Common myeloid progenitor, CD34-positive (primary cell): ENCODE measurements at regions of chr1 and their contacts with region 1.

Region 1: DNA sequence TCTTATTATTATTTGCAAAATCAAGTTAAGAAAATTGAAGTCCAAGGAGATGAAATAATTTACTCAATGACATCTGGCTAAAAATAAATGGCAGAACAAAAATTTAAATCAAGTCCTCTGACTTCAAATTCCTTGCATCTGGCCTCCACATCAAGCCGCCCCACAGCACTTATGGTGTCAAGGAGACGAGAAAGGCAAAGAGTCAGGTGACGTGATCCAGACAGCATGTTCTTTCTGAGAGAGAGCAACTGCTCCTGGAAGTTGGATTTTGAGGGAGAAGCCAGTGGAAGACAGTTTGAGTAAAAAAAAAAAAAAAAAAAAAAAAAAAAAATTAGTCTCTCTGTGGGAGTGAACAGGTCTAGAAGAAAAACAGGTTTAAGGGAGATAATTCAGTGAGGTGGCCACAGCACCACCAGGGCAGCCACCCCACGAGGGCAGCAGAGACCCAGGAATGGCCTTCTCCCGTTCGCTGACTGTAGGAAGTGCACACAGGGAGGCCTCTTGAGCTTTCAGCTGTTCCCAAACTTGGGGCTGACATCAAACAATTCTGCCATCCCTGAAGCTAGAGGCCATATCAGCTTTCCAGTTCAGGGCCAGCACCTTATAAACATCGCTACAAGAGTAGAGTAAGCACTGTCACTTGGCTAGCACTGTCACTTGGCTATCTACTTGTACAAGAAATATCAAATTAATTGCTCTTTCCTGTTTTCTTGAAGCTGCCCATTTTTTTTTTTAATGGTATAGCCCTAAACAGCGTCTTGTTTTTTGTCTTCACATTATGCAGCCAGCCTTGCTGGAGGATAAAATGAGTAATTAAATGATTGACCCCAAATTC is 7.8 kb downstream of the C1orf162 start:
- DNase-seq: peak; percentile 78 to 79 (median 79)
- H3K4me3 ChIP-seq: no peak overlapping the region
- H3K27ac ChIP-seq: no peak overlapping the region
- H3K4me1 ChIP-seq: peaks cover 17 to 36% (median 26%) of the 10 kb centered on the region in 4 experiments
- H3K27me3 ChIP-seq: no peaks in the 10 kb centered on the region

Region 2: GRCh38 chr1:111148376-111148881 is 333.2 kb before region 1 on chr1:
- CTCF ChIA-PET with region 1: no interaction called
- POLR2A ChIA-PET with region 1: no interaction called
- DNase-seq: no peak
- H3K4me3 ChIP-seq: no peak overlapping the region
- H3K27ac ChIP-seq: no peak overlapping the region
- H3K4me1 ChIP-seq: peaks cover 0 to 4% (median 0%) of the 10 kb centered on the region in 4 experiments
- H3K27me3 ChIP-seq: no peaks in the 10 kb centered on the region

Region 3: GRCh38 chr1:111463029-111463683 is 18.4 kb before region 1 on chr1:
- CTCF ChIA-PET with region 1: interaction called, 11 read pairs
- POLR2A ChIA-PET with region 1: no interaction called
- DNase-seq: no peak
- H3K4me3 ChIP-seq: no peak overlapping the region
- H3K27ac ChIP-seq: no peak overlapping the region
- H3K4me1 ChIP-seq: no peaks in the 10 kb centered on the region
- H3K27me3 ChIP-seq: no peaks in the 10 kb centered on the region

Region 4: GRCh38 chr1:111471012-111471411 is 10.6 kb before region 1 on chr1:
- CTCF ChIA-PET with region 1: interaction called, 15 read pairs
- POLR2A ChIA-PET with region 1: no interaction called
- DNase-seq: peak; percentile 94 to 99 (median 98)
- H3K4me3 ChIP-seq: peak overlapping the region in 4 of 7 experiments; percentile 37 to 51 (median 46)
- H3K27ac ChIP-seq: peak overlapping the region; percentile 46 to 69
- H3K4me1 ChIP-seq: peaks cover 40 to 77% (median 51%) of the 10 kb centered on the region in 4 experiments
- H3K27me3 ChIP-seq: no peaks in the 10 kb centered on the region

Region 5: GRCh38 chr1:111497592-111497991 is 16.0 kb after region 1 on chr1:
- CTCF ChIA-PET with region 1: interaction called, 151 read pairs
- POLR2A ChIA-PET with region 1: interaction called, 4 read pairs
- DNase-seq: peak in 2 of 3 donors; percentile 49 to 61
- H3K4me3 ChIP-seq: no peak overlapping the region
- H3K27ac ChIP-seq: no peak overlapping the region
- H3K4me1 ChIP-seq: peaks cover 3 to 26% (median 11%) of the 10 kb centered on the region in 4 experiments
- H3K27me3 ChIP-seq: no peaks in the 10 kb centered on the region

Region 6: DNA sequence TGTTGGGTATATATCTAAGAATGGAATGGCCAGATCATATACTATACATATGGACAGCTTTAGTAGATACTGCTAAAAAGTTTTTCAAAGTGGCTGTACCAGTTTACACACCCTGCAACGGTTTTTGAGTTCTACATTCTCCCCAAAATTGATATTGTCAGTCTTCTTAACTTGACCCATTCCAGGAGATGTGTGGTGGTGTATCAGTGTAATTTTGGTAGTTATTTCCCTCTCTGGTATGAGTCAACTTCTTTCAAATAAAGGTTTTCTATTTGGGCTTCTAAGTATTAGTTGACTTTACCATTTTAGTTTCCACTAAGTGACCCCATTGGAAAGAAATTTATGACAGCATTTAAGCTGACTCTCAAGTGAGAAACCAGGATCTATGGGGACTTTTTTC is 228.4 kb after region 1 on chr1:
- CTCF ChIA-PET with region 1: interaction called, 49 read pairs
- POLR2A ChIA-PET with region 1: no interaction called
- DNase-seq: no peak
- H3K4me3 ChIP-seq: no peak overlapping the region
- H3K27ac ChIP-seq: no peak overlapping the region
- H3K4me1 ChIP-seq: peaks cover 0 to 2% (median 0%) of the 10 kb centered on the region in 4 experiments
- H3K27me3 ChIP-seq: no peaks in the 10 kb centered on the region